Caco-2 (cell line): ENCODE measurements at regions of chr1 and their contacts with region 1.

Region 1: DNA sequence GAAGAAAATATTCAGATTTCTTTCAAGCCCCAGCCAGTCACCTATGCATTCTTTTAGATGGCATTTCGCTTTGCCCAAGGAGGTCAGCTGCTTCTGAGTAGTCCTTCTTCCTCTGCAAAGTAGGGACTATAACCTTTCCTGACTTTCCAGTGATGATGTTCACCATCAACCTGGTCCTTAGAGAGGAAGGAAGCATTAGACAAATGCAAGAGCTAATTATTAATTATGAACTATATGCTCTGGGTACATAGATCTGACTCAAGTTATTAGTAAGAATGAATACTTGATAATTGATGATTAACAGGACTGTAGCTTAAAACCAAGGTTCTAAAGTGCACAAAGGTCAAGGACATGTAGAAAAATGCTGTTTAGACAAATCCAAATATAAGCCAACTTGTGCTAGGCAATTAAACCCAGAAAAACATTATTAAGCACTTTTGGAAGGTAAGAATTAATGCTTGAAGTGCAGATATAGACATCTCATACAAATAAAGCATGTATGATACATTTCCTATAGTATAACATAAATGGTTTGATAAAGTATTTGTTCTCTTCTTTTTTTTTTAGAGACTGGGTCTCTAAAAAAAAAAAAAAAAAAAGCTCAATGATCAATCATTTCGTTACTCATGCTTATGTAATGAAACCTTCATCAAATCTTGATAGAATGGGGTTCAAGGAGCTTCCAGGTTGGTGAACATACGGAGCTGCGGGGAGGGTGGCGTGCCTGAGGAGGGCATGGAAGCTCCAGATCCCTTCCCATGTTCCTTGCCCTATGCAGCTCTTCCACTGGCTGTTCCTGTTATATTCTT is 11.2 kb upstream of the AGMAT start:
- DNase-seq: no peak
- H3K4me3 ChIP-seq: no peak overlapping the region
- H3K4me3 Mint-ChIP-seq: no peak overlapping the region
- H3K27ac Mint-ChIP-seq: no peak overlapping the region
- H3K4me1 ChIP-seq: no peaks in the 10 kb centered on the region
- H3K4me1 Mint-ChIP-seq: no peaks in the 10 kb centered on the region
- H3K27me3 ChIP-seq: no peaks in the 10 kb centered on the region
- H3K27me3 Mint-ChIP-seq: no peaks in the 10 kb centered on the region
- CTCF ChIP-seq: no peak

Region 2: DNA sequence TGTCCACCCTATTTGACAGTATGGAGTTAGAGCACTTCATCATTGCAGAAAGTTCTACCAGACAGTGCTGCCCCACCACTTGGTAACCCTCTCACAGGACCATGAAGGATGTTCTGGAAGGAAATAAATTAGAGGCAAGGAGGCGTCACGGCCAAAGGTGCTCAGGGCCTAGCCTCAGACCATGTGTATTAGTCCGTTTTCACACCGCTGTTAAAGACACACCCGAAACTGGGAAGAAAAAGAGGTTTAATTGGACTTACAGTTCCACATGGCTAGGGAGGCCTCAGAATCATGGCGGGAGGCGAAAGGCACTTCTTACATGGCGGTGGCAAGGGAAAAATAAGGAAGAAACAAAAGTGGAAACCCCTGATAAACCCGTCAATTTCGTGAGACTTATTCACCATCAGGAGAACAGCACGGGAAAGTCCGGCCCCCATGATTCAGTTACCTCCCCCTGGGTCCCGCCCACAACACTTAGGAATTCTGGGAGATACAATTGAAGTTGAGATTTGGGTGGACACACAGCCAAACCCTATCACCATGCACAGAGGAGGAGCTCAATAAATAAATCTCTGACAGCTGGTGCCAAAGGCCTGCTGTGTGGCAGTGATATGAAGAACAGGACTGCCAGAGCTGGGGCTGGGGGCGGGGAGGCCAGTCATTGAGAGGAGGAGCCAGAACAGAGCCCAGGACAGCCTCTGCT is 273.2 kb before region 1 on chr1:
- CTCF ChIA-PET with region 1: no interaction called
- POLR2A ChIA-PET with region 1: no interaction called
- intact Hi-C with region 1: no loop called
- DNase-seq: no peak
- H3K4me3 ChIP-seq: no peak overlapping the region
- H3K4me3 Mint-ChIP-seq: no peak overlapping the region
- H3K27ac Mint-ChIP-seq: no peak overlapping the region
- H3K4me1 ChIP-seq: peaks cover 8% of the 10 kb centered on the region; the same call in 1 of the 2 replicates
- H3K4me1 Mint-ChIP-seq: peaks cover 14% of the 10 kb centered on the region
- H3K27me3 ChIP-seq: no peaks in the 10 kb centered on the region
- H3K27me3 Mint-ChIP-seq: no peaks in the 10 kb centered on the region
- CTCF ChIP-seq: no peak

Region 3: DNA sequence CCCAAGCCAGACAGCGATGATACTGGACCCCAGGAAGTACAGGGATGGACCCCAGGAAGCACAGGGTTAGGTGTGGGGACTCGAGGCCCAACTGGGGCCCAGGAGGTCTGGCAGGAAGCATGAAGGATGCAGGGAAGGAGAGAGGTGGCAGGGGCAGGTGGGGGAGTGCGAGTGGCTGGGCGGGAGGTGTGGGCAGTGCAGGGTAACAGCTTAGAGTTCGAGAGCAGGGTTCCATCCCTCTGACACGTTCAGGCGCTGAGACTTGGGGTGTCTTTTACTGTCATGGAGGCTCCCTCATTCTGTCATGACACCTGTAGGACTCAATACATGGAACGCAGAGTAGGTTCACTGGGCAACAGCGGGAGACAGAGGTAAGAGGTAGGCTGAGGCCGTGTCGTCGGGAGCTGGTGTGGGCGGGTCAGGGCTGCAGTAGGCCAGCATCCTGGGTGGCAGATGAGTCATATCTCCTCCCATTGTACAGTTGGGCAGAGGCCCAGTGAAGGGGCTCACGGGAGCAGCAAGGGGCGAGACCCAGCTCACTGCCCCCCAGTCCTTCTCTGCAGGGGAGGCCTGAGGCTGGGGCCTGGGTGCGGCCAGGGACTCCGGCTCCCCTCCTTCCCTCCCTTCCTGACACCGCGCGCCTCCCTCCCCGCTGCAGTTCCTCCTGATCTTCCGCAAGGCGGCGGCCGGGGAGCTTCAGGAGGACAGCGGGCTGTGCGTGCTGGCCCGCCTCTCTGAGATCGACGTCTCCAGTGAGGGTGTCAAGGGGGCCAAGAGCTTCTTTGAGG is 169.3 kb before region 1 on chr1:
- CTCF ChIA-PET with region 1: no interaction called
- POLR2A ChIA-PET with region 1: no interaction called
- intact Hi-C with region 1: no loop called
- DNase-seq: no peak
- H3K4me3 ChIP-seq: no peak overlapping the region
- H3K4me3 Mint-ChIP-seq: no peak overlapping the region
- H3K27ac Mint-ChIP-seq: peak overlapping the region; percentile 59
- H3K4me1 ChIP-seq: peaks cover 15% of the 10 kb centered on the region
- H3K4me1 Mint-ChIP-seq: peaks cover 9% of the 10 kb centered on the region
- H3K27me3 ChIP-seq: no peaks in the 10 kb centered on the region
- H3K27me3 Mint-ChIP-seq: no peaks in the 10 kb centered on the region
- CTCF ChIP-seq: no peak

Region 4: DNA sequence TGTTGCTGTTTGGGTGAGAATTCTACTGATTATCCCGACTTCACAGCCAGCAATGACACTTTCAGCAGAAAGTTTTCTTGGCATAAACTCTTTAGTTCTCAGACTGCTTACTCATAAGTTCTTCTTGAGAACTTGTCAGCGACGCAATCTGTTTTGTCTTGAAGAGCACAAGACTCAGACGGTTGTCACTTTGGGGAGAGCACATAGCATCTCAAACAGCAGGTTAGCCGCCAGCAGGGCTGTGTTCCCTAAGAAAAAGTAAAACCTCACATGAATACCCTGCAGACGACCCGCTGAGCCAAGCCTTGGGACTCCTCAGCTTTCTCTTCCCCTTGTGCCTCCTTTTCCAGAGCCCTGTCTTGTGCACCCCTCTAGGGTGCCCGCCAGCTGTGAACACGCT is 22.5 kb before region 1 on chr1:
- CTCF ChIA-PET with region 1: no interaction called
- POLR2A ChIA-PET with region 1: no interaction called
- intact Hi-C with region 1: no loop called
- DNase-seq: no peak
- H3K4me3 ChIP-seq: no peak overlapping the region
- H3K4me3 Mint-ChIP-seq: no peak overlapping the region
- H3K27ac Mint-ChIP-seq: no peak overlapping the region
- H3K4me1 ChIP-seq: no peaks in the 10 kb centered on the region
- H3K4me1 Mint-ChIP-seq: no peaks in the 10 kb centered on the region
- H3K27me3 ChIP-seq: no peaks in the 10 kb centered on the region
- H3K27me3 Mint-ChIP-seq: no peaks in the 10 kb centered on the region
- CTCF ChIP-seq: no peak

Region 5: DNA sequence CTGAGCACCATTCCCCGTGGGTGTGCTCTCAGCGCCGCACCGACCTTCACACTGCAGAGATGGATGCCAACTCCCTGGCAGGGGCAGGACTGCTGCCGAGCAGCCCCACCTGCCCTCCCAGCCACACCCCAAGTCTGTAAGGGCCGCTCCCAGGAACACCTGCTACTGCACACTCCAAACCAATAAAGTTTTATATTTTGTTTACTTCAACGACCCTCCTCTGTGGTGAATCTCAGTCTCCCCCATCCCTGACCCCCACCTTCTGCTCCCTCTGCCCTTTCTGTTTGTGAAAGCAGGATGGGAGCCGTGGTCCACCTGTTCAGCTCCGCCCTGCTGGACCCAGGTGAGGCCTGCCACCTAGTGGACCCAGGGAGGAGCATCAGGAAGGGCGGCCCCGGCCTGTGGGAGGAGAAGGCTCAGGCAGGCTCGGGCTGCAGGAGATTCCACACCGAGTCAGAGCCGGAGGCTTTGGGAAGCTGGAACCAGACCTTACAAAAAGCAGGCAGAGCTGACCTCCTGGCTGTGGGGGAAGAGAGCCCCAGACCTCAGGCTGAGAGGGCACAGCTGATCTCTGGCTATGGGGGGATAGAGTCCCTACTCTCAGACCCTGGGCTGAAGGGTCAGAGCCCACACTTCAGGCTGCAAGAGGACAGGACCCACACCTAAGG is 145.3 kb after region 1 on chr1:
- CTCF ChIA-PET with region 1: interaction called, 9 read pairs
- POLR2A ChIA-PET with region 1: no interaction called
- intact Hi-C with region 1: loop called (anchors 2 kb)
- DNase-seq: peak; percentile 89
- H3K4me3 ChIP-seq: peak overlapping the region; percentile 0; the same call in 1 of the 2 replicates
- H3K4me3 Mint-ChIP-seq: peak overlapping the region; percentile 66
- H3K27ac Mint-ChIP-seq: peak overlapping the region; percentile 82
- H3K4me1 ChIP-seq: peaks cover 17% of the 10 kb centered on the region
- H3K4me1 Mint-ChIP-seq: peaks cover 7% of the 10 kb centered on the region
- H3K27me3 ChIP-seq: no peaks in the 10 kb centered on the region
- H3K27me3 Mint-ChIP-seq: no peaks in the 10 kb centered on the region
- CTCF ChIP-seq: peak; percentile 82 to 92